CD8-positive, alpha-beta T cell (primary cell): ENCODE measurements at regions of chr20 and their contacts with region 1.

Region 1: DNA sequence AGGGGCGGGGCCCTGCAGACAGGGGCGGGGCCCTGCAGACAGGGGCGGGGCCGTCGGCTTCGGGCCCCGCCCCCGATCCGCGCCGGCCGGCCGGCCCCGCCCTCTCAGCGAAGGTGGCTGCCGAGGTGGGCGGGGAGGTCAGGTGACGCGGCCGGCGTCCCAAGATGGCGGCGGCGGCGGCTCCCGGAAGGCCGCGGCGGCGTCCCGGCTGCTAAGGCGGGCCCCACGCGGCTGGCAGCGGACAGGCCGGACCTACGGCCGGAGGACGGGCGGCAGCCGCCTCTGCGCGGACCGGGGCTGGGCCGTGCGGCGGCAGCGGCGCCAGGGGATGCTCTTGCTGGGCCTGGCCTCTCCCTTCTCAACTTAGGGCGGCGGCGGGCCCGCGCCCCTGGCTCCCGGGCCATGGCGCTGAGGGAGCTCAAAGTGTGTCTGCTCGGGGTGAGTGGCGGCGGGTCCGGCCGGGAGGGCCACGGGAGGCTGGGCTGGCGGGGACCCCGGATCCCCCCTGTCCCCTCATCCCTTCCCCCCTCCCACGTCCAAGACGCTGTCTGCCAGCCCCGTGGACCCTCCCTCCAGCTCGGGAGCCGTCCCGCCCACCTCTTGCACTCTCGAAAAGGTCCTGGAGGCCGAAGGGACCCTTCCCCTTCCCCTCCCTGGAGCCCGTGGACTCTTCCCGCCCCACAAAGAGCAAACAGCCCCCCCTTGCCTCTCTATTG is at the start of gene RAB22A:
- DNase-seq: peak; percentile 55 to 92 (median 82)
- ATAC-seq: peak; percentile 61
- H3K4me3 ChIP-seq: peak within 1 kb of the TSS; percentile 72 to 77
- H3K4me3 Mint-ChIP-seq: peak within 1 kb of the TSS; percentile 91
- H3K27ac ChIP-seq: peak within 1 kb of the TSS; percentile 71 to 84
- H3K27ac Mint-ChIP-seq: peak within 1 kb of the TSS; percentile 96
- H3K4me1 ChIP-seq: peaks cover 61% of the 10 kb centered on the region
- H3K4me1 Mint-ChIP-seq: peaks cover 62% of the 10 kb centered on the region
- H3K27me3 ChIP-seq: no peaks in the 10 kb centered on the region
- H3K27me3 Mint-ChIP-seq: no peaks in the 10 kb centered on the region
- CTCF ChIP-seq: no peak
- total RNA-seq, gene RAB22A: 19.0 to 22.8 TPM

Region 2: GRCh38 chr20:57398231-57398821 is 911.4 kb before region 1 on chr20:
- CTCF ChIA-PET with region 1: no interaction called
- POLR2A ChIA-PET with region 1: interaction called, 3 read pairs
- intact Hi-C with region 1: loop called in 1 of 2 experiments (anchors 1 kb)
- DNase-seq: peak; percentile 88 to 98 (median 96)
- ATAC-seq: peak; percentile 69
- H3K4me3 ChIP-seq: peak overlapping the region; percentile 40 to 63
- H3K4me3 Mint-ChIP-seq: peak overlapping the region; percentile 76
- H3K27ac ChIP-seq: peak overlapping the region; percentile 78 to 90
- H3K27ac Mint-ChIP-seq: peak overlapping the region; percentile 97
- H3K4me1 ChIP-seq: peaks cover 96% of the 10 kb centered on the region
- H3K4me1 Mint-ChIP-seq: peaks cover 93% of the 10 kb centered on the region
- H3K27me3 ChIP-seq: no peaks in the 10 kb centered on the region
- H3K27me3 Mint-ChIP-seq: no peaks in the 10 kb centered on the region
- CTCF ChIP-seq: no peak

Region 3: DNA sequence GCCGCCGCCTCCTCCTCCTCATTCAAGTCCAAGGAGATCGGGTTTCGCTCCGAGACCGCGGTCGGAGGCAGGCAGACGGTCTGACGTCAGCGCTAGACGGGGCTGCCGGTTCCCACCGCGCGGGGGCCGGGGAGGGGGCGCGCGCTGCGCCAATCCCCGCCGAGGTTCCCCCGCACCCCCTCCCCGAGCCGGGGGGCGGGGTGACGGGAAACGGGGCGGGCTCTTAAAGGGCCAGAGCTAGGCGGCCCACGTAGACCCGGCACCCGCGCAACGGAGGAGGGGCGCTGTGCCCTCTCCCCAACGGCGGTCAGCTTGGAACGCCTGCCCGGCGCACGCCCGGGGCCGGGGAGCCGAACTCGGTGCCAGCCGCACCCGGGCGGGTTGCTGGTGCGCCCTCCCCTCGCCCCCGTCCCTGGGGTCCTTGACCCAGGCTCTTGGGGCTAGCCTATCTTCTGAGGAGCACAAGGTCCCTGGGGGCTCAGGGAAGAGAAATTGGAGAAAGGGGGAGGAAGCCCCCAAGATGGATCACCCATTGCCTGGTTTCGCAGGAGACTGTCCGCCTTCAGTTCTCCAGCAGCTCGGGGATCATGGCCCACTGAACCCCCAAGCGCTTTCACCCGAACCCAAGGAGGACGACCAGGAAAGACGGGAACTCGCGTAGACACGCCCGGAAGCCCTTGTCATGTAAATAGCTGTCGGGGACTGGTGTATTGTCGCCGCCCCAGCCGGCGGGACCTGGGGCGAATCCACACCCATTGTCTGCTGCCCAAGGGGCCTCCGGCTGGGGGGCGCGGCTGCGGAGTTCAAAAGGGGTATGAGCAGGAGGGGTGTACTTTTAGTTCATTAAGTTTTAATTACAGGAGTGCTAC is 599.6 kb before region 1 on chr20 and contains the start of gene PMEPA1:
- CTCF ChIA-PET with region 1: no interaction called
- POLR2A ChIA-PET with region 1: no interaction called
- intact Hi-C with region 1: loop called (anchors 5 kb)
- DNase-seq: peak; percentile 87 to 97 (median 91)
- ATAC-seq: peak; percentile 86
- H3K4me3 ChIP-seq: peak within 1 kb of the TSS; percentile 64 to 99
- H3K4me3 Mint-ChIP-seq: peak within 1 kb of the TSS; percentile 92
- H3K27ac ChIP-seq: peak within 1 kb of the TSS; percentile 48 to 78
- H3K27ac Mint-ChIP-seq: peak within 1 kb of the TSS; percentile 96
- H3K4me1 ChIP-seq: peaks cover 32% of the 10 kb centered on the region
- H3K4me1 Mint-ChIP-seq: peaks cover 33% of the 10 kb centered on the region
- H3K27me3 ChIP-seq: peaks cover 0 to 12% of the 10 kb centered on the region in 2 experiments
- H3K27me3 Mint-ChIP-seq: no peaks in the 10 kb centered on the region
- CTCF ChIP-seq: no peak
- total RNA-seq, gene PMEPA1: 22.2 to 22.4 TPM

Region 4: DNA sequence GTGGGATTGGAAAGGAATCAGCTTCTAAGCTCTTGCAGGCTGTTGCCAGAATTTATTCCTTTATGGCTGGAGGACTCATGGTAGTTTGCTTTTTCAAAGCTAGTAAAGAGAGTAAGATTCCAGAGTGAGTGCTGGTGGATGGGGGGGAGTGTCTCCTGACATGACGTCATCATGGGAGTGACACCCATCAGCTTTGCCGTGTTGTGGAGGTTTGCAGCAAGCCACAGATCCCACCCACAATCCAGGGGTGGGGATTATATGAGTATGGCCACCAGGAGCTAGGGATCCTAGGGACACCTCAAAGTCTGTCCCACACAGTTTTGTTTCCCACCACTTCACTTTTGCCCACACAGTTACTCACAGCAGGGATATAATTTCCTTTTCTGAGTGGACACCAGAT is 571.3 kb before region 1 on chr20:
- CTCF ChIA-PET with region 1: no interaction called
- POLR2A ChIA-PET with region 1: no interaction called
- intact Hi-C with region 1: no loop called
- DNase-seq: no peak
- ATAC-seq: no peak
- H3K4me3 ChIP-seq: no peak overlapping the region
- H3K4me3 Mint-ChIP-seq: no peak overlapping the region
- H3K27ac ChIP-seq: no peak overlapping the region
- H3K27ac Mint-ChIP-seq: no peak overlapping the region
- H3K4me1 ChIP-seq: no peaks in the 10 kb centered on the region
- H3K4me1 Mint-ChIP-seq: no peaks in the 10 kb centered on the region
- H3K27me3 ChIP-seq: no peaks in the 10 kb centered on the region
- H3K27me3 Mint-ChIP-seq: peaks cover 20% of the 10 kb centered on the region
- CTCF ChIP-seq: no peak

Region 5: GRCh38 chr20:58160451-58161061 is 149.2 kb before region 1 on chr20:
- CTCF ChIA-PET with region 1: no interaction called
- POLR2A ChIA-PET with region 1: no interaction called
- intact Hi-C with region 1: no loop called
- DNase-seq: no peak
- ATAC-seq: no peak
- H3K4me3 ChIP-seq: no peak overlapping the region
- H3K4me3 Mint-ChIP-seq: no peak overlapping the region
- H3K27ac ChIP-seq: no peak overlapping the region
- H3K27ac Mint-ChIP-seq: no peak overlapping the region
- H3K4me1 ChIP-seq: no peaks in the 10 kb centered on the region
- H3K4me1 Mint-ChIP-seq: no peaks in the 10 kb centered on the region
- H3K27me3 ChIP-seq: no peaks in the 10 kb centered on the region
- H3K27me3 Mint-ChIP-seq: peaks cover 3% of the 10 kb centered on the region
- CTCF ChIP-seq: no peak

Region 6: DNA sequence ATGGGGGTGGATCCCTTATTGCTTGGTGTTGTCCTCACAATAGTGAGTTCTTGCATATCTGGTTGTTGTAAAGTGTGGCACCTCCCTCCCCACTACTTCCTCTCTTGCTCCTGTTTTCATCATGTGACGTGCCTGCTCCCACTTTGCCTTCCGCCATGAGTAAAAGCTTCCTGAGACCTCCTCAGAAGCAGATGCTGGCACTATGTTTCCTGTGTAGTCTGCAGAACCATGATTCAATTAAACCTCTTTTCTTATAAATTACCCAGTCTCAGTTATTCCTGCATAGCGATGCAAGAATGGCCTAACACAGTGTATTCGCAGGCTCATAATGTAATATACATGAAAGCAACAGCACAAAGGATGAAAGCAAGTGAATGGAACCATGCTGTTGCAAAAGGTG is 52.9 kb before region 1 on chr20:
- CTCF ChIA-PET with region 1: no interaction called
- POLR2A ChIA-PET with region 1: no interaction called
- intact Hi-C with region 1: no loop called
- DNase-seq: no peak
- ATAC-seq: no peak
- H3K4me3 ChIP-seq: no peak overlapping the region
- H3K4me3 Mint-ChIP-seq: no peak overlapping the region
- H3K27ac ChIP-seq: no peak overlapping the region
- H3K27ac Mint-ChIP-seq: no peak overlapping the region
- H3K4me1 ChIP-seq: peaks cover 3% of the 10 kb centered on the region
- H3K4me1 Mint-ChIP-seq: peaks cover 11% of the 10 kb centered on the region
- H3K27me3 ChIP-seq: no peaks in the 10 kb centered on the region
- H3K27me3 Mint-ChIP-seq: no peaks in the 10 kb centered on the region
- CTCF ChIP-seq: no peak

Region 7: DNA sequence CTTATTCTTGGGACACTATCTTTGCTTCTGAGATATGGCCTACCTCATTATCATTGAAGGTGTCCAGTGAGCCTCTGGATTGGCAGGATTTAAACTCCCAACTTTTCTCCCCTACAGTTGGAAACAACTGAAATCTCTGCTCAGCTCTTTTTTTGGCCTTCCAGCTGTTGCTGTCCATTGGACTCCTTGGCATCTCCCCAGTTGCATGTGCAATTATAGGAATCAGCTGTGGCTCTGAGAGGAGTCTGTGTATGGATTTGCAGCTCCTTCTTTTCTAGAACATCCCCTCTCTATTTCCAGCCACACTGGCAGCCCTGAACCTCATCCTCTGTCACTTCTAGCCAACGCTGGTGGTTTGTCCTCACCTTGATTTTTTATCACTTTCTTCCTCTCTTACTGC is 21.0 kb after region 1 on chr20:
- CTCF ChIA-PET with region 1: no interaction called
- POLR2A ChIA-PET with region 1: no interaction called
- intact Hi-C with region 1: no loop called
- DNase-seq: no peak
- ATAC-seq: no peak
- H3K4me3 ChIP-seq: no peak overlapping the region
- H3K4me3 Mint-ChIP-seq: no peak overlapping the region
- H3K27ac ChIP-seq: no peak overlapping the region
- H3K27ac Mint-ChIP-seq: no peak overlapping the region
- H3K4me1 ChIP-seq: no peaks in the 10 kb centered on the region
- H3K4me1 Mint-ChIP-seq: peaks cover 50% of the 10 kb centered on the region
- H3K27me3 ChIP-seq: no peaks in the 10 kb centered on the region
- H3K27me3 Mint-ChIP-seq: no peaks in the 10 kb centered on the region
- CTCF ChIP-seq: no peak

Region 8: GRCh38 chr20:58388882-58389323 is 79.2 kb after region 1 on chr20 and contains the start of gene VAPB:
- CTCF ChIA-PET with region 1: interaction called, 3 read pairs
- POLR2A ChIA-PET with region 1: interaction called, 8 read pairs
- intact Hi-C with region 1: loop called (anchors 1 kb)
- DNase-seq: peak; percentile 94 to 99 (median 97)
- ATAC-seq: peak; percentile 95
- H3K4me3 ChIP-seq: peak within 1 kb of the TSS; percentile 87 to 90
- H3K4me3 Mint-ChIP-seq: peak within 1 kb of the TSS; percentile 88
- H3K27ac ChIP-seq: peak within 1 kb of the TSS; percentile 98 to 99
- H3K27ac Mint-ChIP-seq: peak within 1 kb of the TSS; percentile 96
- H3K4me1 ChIP-seq: peaks cover 43% of the 10 kb centered on the region
- H3K4me1 Mint-ChIP-seq: peaks cover 40% of the 10 kb centered on the region
- H3K27me3 ChIP-seq: peaks cover 0 to 2% of the 10 kb centered on the region in 2 experiments
- H3K27me3 Mint-ChIP-seq: peaks cover 4% of the 10 kb centered on the region
- CTCF ChIP-seq: no peak
- total RNA-seq, gene VAPB: 29.3 to 32.3 TPM

Region 9: GRCh38 chr20:58980700-58981627 is 671.2 kb after region 1 on chr20 and contains the start of gene NELFCD:
- CTCF ChIA-PET with region 1: no interaction called
- POLR2A ChIA-PET with region 1: no interaction called
- intact Hi-C with region 1: loop called in 1 of 2 experiments (anchors 5 kb)
- DNase-seq: peak; percentile 81 to 94 (median 89)
- ATAC-seq: peak; percentile 87
- H3K4me3 ChIP-seq: peak within 1 kb of the TSS; percentile 77 to 93
- H3K4me3 Mint-ChIP-seq: peak within 1 kb of the TSS; percentile 93
- H3K27ac ChIP-seq: peak within 1 kb of the TSS; percentile 62 to 66
- H3K27ac Mint-ChIP-seq: peak within 1 kb of the TSS; percentile 94
- H3K4me1 ChIP-seq: peaks cover 29% of the 10 kb centered on the region
- H3K4me1 Mint-ChIP-seq: peaks cover 39% of the 10 kb centered on the region
- H3K27me3 ChIP-seq: no peaks in the 10 kb centered on the region
- H3K27me3 Mint-ChIP-seq: no peaks in the 10 kb centered on the region
- CTCF ChIP-seq: no peak
- total RNA-seq, gene NELFCD: 101 to 113 TPM

Region 10: DNA sequence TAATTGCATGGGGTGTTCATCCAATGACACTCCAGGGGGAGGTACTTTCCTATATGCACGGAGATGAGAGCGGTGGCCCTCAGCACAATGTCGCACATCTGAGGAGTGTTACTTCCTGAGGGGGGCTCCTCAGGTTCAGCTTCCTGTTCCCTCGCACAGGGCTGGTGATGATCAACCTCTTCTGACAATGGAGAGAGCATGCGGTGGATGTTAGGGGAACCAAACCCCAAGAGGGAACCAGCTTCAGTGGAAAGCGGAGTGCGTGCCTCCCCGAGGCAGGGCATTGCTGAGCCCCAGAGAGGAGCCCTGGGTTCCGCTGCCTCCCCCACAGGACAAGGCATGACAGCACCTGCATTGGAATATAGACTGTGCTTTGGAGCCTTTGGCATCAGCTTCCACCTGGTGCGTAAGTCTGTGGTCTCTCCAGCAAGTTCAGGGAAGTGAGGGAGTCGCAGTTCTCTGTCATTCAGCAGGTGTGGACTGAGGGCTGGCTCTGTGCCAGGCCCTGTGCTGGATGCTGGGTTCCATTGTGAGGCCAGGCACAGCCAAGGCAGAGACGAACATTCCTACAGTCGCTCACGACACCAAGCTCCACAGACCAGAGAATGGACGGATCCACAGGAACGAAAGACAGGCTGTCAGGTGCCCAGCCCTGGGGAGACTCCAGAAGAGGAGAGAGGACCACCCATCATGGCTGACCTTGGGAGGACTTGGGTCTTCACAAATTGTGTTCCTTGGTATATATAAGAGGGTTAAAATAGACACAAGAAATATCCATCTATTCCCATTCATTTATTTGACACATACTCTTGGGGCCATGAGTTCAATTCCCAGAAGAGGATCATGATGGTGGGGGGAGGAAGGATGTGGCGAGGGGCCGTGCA is 850.0 kb after region 1 on chr20:
- CTCF ChIA-PET with region 1: no interaction called
- POLR2A ChIA-PET with region 1: no interaction called
- intact Hi-C with region 1: loop called (anchors 5 kb)
- DNase-seq: peak; percentile 56 to 97 (median 79)
- ATAC-seq: peak; percentile 86
- H3K4me3 ChIP-seq: peak overlapping the region; percentile 47 to 67
- H3K4me3 Mint-ChIP-seq: peak overlapping the region; percentile 83
- H3K27ac ChIP-seq: peak overlapping the region; percentile 79 to 93
- H3K27ac Mint-ChIP-seq: peak overlapping the region; percentile 98
- H3K4me1 ChIP-seq: peaks cover 69% of the 10 kb centered on the region
- H3K4me1 Mint-ChIP-seq: peaks cover 91% of the 10 kb centered on the region
- H3K27me3 ChIP-seq: no peaks in the 10 kb centered on the region
- H3K27me3 Mint-ChIP-seq: no peaks in the 10 kb centered on the region
- CTCF ChIP-seq: peak; percentile 23